ENCODE measurements at regions of chr11 and their contacts with region 1.

Region 1: GRCh38 chr11:112289588-112290492 is 29.2 kb upstream of the PLET1 start:
- DNase-seq: peak; percentile 69 to 81 (median 73)
- ATAC-seq: peak; percentile 90
- H3K4me3 ChIP-seq: peak overlapping the region in 1 of 2 donors; percentile 21
- H3K27ac ChIP-seq: no peak overlapping the region
- H3K4me1 ChIP-seq: peaks cover 24% of the 10 kb centered on the region
- H3K27me3 ChIP-seq: no peaks in the 10 kb centered on the region
- CTCF ChIP-seq: peak; percentile 63 to 91 (median 81)
- POLR2A ChIP-seq: no peak

Region 2: GRCh38 chr11:112555491-112556364 is 265.9 kb after region 1 on chr11:
- intact Hi-C with region 1: loop called (anchors 10 kb)
- DNase-seq: peak; percentile 48 to 63 (median 58)
- ATAC-seq: peak; percentile 65
- H3K4me3 ChIP-seq: no peak overlapping the region
- H3K27ac ChIP-seq: no peak overlapping the region
- H3K4me1 ChIP-seq: no peaks in the 10 kb centered on the region
- H3K27me3 ChIP-seq: no peaks in the 10 kb centered on the region
- CTCF ChIP-seq: peak; percentile 51 to 72 (median 67)
- POLR2A ChIP-seq: no peak